Astrocyte of the cerebellum (primary cell): ENCODE measurements at regions of chr2 and their contacts with region 1.

Region 1: DNA sequence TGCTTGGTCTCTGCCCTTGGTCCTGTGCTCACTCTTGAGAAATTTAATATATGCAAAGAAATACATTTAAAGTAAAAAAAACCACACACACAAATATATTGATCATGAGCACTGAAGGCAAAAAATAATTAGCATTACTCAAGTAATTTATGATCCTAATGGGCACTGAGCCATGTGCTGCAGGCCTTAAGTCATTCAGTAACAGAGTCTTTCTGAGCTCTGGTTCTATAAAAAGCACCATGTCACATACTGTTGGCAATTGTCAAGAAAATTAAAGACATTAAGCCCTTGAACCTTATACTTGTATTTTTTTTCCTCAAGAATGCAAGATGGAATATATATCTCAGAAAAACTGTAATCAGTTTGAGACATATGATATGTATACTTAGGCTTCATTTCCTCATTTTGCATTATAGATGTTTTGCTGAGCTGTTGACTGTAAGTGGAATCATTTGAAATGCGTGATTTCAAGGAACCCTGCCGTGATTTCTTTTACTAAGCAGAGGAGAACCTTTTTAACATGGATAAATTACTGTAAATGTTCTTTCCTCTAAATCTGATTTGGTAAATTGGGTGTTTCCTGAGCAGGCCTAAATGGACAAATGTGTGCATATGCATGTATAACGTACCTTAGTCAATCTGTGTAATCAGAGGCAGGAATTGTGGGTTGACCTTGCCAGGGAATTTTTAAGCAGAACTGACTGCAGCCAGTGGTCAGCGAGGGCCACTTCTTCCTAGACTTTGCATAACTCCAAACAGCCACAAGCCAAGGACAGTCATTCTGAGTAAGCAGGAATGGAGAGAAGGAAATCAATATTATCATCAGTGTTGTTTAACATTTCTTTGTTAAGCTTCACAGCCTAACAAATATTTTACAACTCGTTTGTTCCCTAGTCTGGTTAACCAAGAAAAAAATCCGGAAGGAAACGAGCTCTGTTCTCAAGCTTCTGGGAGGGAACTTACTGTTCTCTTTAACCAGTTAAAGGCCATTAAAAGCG is 191.5 kb upstream of the ATP5MC3 start:
- DNase-seq: peak; percentile 4
- H3K4me3 ChIP-seq: no peak overlapping the region
- CTCF ChIP-seq: no peak

Region 2: GRCh38 chr2:175439416-175439815 is 66.4 kb after region 1 on chr2:
- in situ Hi-C with region 1: loop called (anchors 5 kb)
- DNase-seq: no peak
- H3K4me3 ChIP-seq: no peak overlapping the region
- CTCF ChIP-seq: no peak

Region 3: GRCh38 chr2:175463589-175464310 is 90.7 kb after region 1 on chr2:
- in situ Hi-C with region 1: no loop called
- DNase-seq: no peak
- H3K4me3 ChIP-seq: no peak overlapping the region
- CTCF ChIP-seq: no peak

Region 4: DNA sequence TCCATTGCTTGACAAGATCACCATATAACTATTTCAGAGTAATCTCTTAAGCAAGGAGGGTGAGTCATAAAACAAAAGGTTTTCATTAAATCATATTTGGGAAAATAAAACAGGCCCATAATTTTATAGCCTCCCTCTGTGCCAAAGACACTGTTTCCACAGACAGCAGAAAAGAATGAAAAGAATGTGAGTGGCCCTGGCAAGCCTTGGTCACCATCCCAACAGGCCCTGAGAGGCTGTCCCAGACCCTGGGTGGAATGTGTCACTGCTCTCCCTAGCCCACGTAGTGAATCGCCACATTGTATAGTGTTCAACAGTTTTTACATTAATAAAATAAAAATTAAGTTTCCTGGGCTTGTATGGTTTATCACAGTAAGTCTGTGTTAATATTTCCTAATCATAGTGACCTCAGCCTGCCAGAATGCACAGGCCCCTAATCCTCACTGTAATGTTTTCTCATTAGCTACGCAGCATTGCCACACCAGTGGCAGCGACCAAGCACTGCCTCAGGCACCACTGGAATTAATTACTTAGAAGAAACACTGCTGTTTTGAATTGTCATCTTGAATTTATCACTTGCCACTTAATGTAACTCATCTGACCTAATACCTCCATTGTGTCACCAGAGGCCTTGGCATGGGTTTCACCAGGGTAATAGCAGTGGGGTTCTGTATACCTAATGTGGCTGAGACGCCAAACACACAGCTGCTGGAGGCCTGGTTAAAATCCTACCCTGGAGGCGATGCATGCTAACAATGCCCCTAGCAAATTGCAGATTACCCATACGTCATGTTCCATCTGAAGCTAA is 227.2 kb after region 1 on chr2:
- in situ Hi-C with region 1: no loop called
- DNase-seq: no peak
- H3K4me3 ChIP-seq: no peak overlapping the region
- CTCF ChIP-seq: no peak

Region 5: GRCh38 chr2:176096986-176097819 is 724.2 kb after region 1 on chr2:
- in situ Hi-C with region 1: loop called (anchors 5 kb)
- DNase-seq: peak; percentile 27
- H3K4me3 ChIP-seq: peak overlapping the region; percentile 17
- CTCF ChIP-seq: peak; percentile 81